ENCODE measurements at regions of chr7 and their contacts with region 1.

Region 1: DNA sequence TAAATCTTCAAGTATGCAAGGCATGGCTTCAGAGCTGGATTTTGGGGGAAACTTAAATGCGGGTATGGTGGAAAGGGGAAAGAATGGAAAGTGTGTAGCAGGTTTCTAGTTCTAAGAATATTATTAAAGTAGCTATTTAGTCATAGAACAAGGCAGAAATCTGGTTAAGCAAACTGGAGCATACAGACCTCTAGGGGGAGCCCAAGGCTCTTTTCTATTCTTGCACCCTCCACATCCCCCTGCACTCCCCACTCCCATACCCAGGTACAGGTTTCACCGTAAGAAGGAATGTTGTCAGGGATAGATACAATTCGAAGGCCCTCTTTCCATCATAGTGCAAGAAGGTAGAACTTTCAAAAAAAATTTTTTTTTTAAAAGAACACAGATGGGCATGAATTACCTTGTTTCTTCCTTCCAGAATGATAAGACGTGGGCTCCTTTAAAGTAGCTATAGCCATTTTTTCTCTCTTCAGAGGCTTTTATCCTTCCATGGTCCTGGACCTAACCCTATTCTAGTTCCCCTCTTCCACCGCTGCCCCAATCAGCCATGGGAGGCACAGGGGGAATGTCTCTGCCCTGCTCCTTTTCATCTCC is 41.5 kb upstream of the SMIM30 start:
- H3K4me3 Mint-ChIP-seq: no peak overlapping the region
- H3K27ac Mint-ChIP-seq: no peak overlapping the region
- H3K4me1 Mint-ChIP-seq: no peaks in the 10 kb centered on the region
- H3K27me3 Mint-ChIP-seq: peaks cover 4% of the 10 kb centered on the region

Region 2: DNA sequence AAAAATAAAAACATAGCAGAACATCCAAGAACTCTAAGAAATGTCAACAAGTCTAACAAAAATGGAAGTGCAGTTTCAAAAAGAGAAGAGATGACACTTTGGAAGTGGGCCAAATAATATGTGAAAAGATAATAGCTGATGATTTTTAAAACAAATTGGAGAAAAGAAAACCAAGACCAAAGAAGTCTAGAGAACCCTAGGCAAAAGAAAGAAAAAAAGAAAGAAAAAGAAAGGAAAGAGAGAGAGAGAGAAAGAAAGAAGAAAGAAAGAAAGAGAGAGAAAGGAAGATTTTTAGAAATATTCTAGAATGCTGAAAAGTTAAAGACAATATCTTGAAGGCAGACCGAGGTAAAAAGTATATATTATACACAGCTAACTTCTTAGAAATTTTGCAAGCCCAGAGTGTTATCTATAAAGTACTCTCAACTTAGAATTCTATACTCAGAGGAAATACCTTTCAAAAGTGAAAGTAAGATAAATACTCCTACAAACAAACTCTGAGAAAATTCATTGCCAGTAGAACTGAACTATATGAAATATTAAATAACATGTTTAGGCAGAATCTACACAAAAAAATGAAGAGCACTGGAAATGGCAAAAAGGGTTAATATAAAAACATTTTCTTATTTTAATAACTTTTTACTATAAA is 97.2 kb after region 1 on chr7:
- intact Hi-C with region 1: no loop called
- H3K4me3 Mint-ChIP-seq: no peak overlapping the region
- H3K27ac Mint-ChIP-seq: no peak overlapping the region
- H3K4me1 Mint-ChIP-seq: no peaks in the 10 kb centered on the region
- H3K27me3 Mint-ChIP-seq: no peaks in the 10 kb centered on the region

Region 3: DNA sequence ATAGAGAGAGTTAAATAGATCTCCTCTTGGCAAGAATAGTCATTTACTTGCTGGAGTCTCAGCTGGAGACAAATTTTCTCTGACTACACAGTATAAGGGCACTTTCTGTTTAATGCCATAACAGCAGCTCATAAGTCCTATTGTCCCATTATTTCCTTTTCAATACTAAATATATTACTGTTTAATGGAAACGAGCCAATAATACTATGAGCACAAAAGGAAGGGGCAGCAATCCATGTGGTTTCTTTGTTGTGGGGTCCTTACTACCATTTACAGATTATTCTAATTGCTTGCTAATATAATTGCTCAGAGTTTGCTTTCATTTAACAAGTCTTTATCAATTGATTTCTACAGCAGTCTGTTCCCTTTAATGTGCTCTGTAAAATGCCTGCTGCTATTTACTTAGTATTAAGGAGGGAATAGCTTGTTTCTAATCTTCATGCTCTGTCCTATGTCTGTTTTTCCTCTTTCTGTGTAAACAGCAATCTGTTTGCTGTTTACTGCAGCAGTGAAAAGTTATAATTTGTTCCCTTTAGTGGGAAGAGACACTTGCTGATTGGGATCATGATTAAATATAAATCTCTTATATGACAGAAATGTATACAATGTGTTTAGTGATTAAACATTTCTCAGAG is 254.7 kb after region 1 on chr7:
- intact Hi-C with region 1: loop called (anchors 10 kb)
- H3K4me3 Mint-ChIP-seq: no peak overlapping the region
- H3K27ac Mint-ChIP-seq: no peak overlapping the region
- H3K4me1 Mint-ChIP-seq: no peaks in the 10 kb centered on the region
- H3K27me3 Mint-ChIP-seq: no peaks in the 10 kb centered on the region